ENCODE measurements at regions of chr20 and their contacts with region 1.

Region 1: GRCh38 chr20:11810314-11811083 is 107.2 kb upstream of the BTBD3 start:
- DNase-seq: no peak
- H3K4me3 ChIP-seq: no peak overlapping the region
- H3K27ac ChIP-seq: no peak overlapping the region
- H3K4me1 ChIP-seq: peaks cover 8% of the 10 kb centered on the region
- H3K27me3 ChIP-seq: no peaks in the 10 kb centered on the region
- CTCF ChIP-seq: no peak
- POLR2A ChIP-seq: no peak

Region 2: GRCh38 chr20:10125757-10126156 is 1684.7 kb before region 1 on chr20:
- CTCF ChIA-PET with region 1: no interaction called
- POLR2A ChIA-PET with region 1: no interaction called
- dilution Hi-C with region 1: no loop called
- intact Hi-C with region 1: loop called (anchors 10 kb)
- DNase-seq: no peak
- H3K4me3 ChIP-seq: no peak overlapping the region
- H3K27ac ChIP-seq: no peak overlapping the region
- H3K4me1 ChIP-seq: no peaks in the 10 kb centered on the region
- H3K27me3 ChIP-seq: no peaks in the 10 kb centered on the region
- CTCF ChIP-seq: no peak
- POLR2A ChIP-seq: no peak

Region 3: GRCh38 chr20:11734431-11734830 is 76.1 kb before region 1 on chr20:
- CTCF ChIA-PET with region 1: no interaction called
- POLR2A ChIA-PET with region 1: no interaction called
- dilution Hi-C with region 1: no loop called
- intact Hi-C with region 1: no loop called
- DNase-seq: no peak
- H3K4me3 ChIP-seq: no peak overlapping the region
- H3K27ac ChIP-seq: no peak overlapping the region
- H3K4me1 ChIP-seq: peaks cover 13% of the 10 kb centered on the region
- H3K27me3 ChIP-seq: no peaks in the 10 kb centered on the region
- CTCF ChIP-seq: no peak
- POLR2A ChIP-seq: no peak

Region 4: DNA sequence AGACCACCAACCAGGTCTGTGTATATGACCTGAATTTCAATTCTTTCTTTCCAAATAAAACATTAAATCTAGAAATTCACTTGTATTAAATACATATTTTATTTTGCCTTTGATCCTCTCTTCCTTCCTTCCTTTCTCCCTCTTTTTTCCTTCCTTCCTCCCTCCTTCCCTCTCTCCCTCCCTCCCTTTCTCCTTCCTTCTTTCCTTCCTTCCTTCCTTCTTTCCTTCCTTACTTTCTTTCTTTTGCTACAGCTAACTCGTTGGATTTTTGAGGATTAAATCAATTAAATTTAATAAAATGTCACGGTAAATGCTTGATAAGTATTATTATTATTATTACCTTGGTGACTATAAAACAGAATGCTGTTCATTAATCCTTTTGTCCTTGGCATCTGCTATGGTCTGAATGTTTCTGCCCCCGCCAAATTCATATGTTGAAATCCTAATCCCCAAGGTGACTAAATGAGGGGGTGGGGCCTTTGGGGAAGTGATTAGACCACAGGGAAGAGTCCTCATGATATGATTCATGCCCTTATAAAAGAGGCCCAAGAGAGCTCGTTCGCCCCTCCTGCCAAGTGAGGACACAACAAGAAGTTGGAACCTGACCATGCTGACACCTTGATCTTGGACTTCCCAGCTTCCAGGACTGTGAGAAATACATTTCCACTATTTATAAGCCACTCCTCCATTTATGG is 39.6 kb after region 1 on chr20:
- CTCF ChIA-PET with region 1: no interaction called
- POLR2A ChIA-PET with region 1: no interaction called
- dilution Hi-C with region 1: no loop called
- intact Hi-C with region 1: loop called (anchors 5 kb)
- DNase-seq: no peak
- H3K4me3 ChIP-seq: no peak overlapping the region
- H3K27ac ChIP-seq: no peak overlapping the region
- H3K4me1 ChIP-seq: no peaks in the 10 kb centered on the region
- H3K27me3 ChIP-seq: no peaks in the 10 kb centered on the region
- CTCF ChIP-seq: no peak
- POLR2A ChIP-seq: no peak